HEK293 (cell line): ENCODE measurements at regions of chrX and their contacts with region 1.

Region 1: GRCh38 chrX:23782863-23783568 is at the start of gene SAT1:
- H3K4me3 ChIP-seq: peak within 1 kb of the TSS; percentile 50
- H3K27ac ChIP-seq: peak within 1 kb of the TSS; percentile 87
- H3K4me1 ChIP-seq: no peaks in the 10 kb centered on the region
- CTCF ChIP-seq: peak; percentile 71; the same call in 1 of the 2 replicates

Region 2: DNA sequence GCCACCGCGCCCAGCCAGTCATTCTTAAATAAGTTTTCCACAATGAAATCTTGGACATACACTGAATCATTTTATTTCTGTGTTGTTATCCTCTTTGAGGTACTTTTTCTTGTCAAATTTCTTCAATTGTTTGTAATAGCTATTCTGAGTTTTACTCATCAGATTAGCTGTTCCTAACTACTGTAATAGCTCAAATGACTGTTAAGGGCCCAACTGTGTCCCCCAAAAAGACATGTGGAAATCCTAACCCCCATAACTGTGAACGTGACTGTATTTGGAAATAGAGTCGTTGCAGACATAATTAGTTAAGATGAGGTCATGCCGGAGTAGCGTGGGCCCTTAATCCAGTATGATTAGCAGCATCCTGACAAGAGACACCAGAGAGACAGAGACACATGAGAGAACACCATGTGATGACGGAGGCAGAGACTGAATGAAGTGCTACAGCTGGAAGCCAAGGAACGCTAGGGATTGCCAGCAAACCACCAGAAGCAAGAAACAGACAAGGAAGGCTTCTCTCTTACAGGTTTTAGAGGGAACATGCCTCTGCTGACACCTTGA is 62.8 kb before region 1 on chrX:
- CTCF ChIA-PET with region 1: no interaction called
- POLR2A ChIA-PET with region 1: no interaction called
- H3K4me3 ChIP-seq: no peak overlapping the region
- H3K27ac ChIP-seq: no peak overlapping the region
- H3K4me1 ChIP-seq: no peaks in the 10 kb centered on the region
- CTCF ChIP-seq: no peak

Region 3: DNA sequence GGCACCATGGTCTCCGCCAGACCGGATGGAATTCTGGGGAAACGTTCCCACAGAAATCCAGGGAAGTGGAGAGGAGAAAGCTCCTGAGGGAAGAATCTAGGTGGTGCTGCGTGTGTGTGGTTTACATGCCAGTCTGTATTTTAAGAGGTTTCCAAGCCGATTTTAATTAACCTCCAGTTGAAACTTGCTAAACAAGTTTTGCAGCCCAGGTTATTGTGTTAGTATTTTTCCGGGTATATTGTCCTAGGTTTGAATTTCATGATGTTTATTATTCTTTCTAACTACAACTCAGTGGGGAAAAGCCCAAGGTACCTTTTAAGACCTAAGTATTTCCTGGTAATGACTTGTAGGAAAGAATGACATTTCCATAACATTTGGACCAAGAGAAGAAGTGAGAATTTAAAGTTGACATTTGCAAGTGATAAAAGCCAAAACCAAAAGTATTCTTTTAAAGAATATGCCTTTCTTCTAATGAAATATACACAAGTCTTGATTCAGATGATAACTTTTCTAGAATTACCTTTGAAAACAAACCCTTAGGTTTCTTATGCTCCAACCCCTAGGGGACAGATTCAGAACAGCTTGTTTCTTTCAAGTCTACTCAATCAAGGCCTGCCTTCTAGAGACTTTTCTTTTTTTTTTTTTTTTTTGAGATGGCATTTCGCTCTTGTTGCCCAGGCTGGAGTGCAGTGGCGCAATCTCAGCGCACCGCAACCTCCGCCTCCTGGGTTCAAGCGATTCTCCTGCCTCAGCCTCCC is 14.5 kb after region 1 on chrX:
- CTCF ChIA-PET with region 1: interaction called, 4 read pairs
- POLR2A ChIA-PET with region 1: interaction called, 39 read pairs
- H3K4me3 ChIP-seq: no peak overlapping the region
- H3K27ac ChIP-seq: peak overlapping the region; percentile 76
- H3K4me1 ChIP-seq: peaks cover 7% of the 10 kb centered on the region
- CTCF ChIP-seq: no peak

Region 4: GRCh38 chrX:23817172-23817601 is 34.2 kb after region 1 on chrX:
- CTCF ChIA-PET with region 1: interaction called, 14 read pairs
- POLR2A ChIA-PET with region 1: interaction called, 44 read pairs
- H3K4me3 ChIP-seq: no peak overlapping the region
- H3K27ac ChIP-seq: no peak overlapping the region
- H3K4me1 ChIP-seq: peaks cover 1% of the 10 kb centered on the region
- CTCF ChIP-seq: no peak

Region 5: DNA sequence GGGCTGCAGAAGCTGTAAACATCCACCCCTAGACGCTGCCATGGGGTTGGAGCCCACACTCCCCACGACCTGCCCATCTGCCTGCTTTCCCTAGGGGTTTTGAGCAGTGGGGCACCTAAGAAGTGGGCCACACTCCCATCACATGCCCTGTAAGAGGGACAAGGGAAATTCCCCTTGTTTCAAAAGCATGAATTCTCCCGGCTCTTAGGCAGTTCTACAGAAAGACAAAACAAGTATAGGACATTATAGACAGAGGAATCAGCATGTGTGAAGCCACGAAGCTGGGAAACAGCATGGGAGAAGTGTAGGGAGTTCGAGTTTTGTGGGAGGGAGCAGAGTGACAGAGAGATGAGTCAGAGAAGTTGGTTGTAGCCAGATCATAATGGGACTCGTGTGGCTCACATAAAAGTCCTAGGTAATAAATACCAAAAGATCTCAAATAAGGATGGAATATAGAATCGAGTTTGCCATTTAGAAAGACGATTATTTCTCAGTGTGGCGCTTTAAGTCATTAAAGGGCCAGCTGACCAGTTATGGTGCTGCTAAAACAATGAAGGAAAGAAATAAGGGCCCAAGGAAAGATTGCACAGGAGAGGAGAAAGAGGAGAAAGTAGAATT is 100.8 kb after region 1 on chrX:
- CTCF ChIA-PET with region 1: interaction called, 3 read pairs
- POLR2A ChIA-PET with region 1: interaction called, 14 read pairs
- H3K4me3 ChIP-seq: no peak overlapping the region
- H3K27ac ChIP-seq: 0 out of 2 replicates have a peak overlapping the region, but pooled peaks have one; percentile 42
- H3K4me1 ChIP-seq: peaks cover 16% of the 10 kb centered on the region
- CTCF ChIP-seq: no peak

Region 6: DNA sequence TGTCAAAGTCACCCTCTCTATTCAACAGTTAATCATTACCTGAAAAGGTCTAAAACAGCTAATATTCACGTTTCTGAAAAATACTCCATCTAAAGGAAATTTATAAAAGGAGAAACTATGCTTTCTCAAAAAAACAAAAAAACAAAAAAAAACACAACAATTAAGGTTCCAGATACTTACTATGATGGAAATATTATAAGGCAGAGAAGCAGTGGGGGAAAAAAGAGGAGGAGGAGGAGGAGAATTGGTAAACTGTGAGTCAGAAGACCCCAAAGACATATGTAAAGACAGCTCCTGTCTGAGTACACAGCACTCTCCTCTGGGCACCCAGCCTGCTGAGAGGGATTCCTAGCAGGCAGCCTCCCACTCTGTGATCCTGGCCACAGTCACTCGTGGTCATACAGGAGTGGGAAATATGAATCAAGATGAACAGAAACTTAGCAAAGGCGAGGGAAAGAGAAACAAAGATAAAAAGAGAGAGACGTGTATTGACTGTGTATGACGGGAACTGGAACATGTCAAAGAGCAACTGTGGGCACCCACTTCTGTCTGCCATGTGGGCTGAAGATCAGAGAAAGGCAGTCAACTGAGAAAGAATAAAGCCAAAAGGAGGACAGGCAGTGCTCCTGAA is 231.5 kb after region 1 on chrX:
- CTCF ChIA-PET with region 1: no interaction called
- POLR2A ChIA-PET with region 1: no interaction called
- H3K4me3 ChIP-seq: no peak overlapping the region
- H3K27ac ChIP-seq: no peak overlapping the region
- H3K4me1 ChIP-seq: peaks cover 1% of the 10 kb centered on the region; the same call in 1 of the 2 replicates
- CTCF ChIP-seq: no peak

Region 7: DNA sequence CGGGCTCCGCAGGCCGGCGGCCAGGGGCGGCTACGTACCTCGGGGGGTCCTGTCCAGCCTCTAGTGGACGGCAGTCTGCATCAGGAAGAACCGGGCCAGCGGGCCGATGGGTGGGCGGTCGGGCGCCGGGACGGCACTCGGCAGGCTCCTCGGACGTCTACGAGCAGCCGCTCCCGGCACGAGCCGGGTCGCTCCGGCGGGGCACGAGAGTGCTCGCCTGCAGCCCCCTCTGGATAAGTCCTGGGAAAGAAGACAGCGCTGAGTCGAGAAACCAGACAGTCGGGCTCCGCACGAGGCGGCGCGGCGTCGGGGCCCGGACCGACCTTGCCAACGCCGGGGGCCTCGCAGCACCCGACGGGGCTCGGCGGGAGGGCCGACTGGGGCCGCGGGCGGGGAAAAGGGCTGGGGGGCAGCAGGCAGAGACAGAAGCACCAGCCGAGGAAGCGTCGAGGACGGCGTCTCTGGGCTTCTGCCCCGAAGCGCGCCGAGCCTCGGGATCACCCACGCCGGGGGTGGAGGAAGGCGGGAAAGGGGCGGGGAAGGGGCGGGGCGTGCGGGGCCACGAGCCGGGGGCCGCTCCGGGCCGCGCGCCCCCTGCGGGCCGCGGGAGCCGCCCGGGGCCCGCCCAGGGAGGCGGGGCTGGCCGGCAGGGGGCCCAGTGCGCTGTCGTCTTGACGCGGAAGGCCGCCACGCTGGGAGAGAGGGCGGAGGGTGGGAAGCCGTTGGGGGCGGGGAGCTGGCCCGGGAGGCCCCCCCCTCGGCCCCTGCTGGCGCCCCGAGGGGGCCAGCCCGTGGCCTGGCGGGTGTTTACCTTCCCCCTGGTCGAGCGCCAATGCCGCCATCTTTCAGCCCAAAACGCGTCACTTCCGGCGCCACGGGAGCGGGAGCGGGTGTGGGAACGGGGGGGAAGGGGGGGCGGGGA is 242.1 kb after region 1 on chrX:
- CTCF ChIA-PET with region 1: no interaction called
- POLR2A ChIA-PET with region 1: interaction called, 12 read pairs
- H3K4me3 ChIP-seq: peak overlapping the region; percentile 75
- H3K27ac ChIP-seq: peak overlapping the region; percentile 96
- H3K4me1 ChIP-seq: no peaks in the 10 kb centered on the region
- CTCF ChIP-seq: 0 out of 2 replicates have a peak, but pooled peaks have one; percentile 10